CD8-positive, alpha-beta T cell (primary cell): ENCODE measurements at regions of chr4 and their contacts with region 1.

Region 1: DNA sequence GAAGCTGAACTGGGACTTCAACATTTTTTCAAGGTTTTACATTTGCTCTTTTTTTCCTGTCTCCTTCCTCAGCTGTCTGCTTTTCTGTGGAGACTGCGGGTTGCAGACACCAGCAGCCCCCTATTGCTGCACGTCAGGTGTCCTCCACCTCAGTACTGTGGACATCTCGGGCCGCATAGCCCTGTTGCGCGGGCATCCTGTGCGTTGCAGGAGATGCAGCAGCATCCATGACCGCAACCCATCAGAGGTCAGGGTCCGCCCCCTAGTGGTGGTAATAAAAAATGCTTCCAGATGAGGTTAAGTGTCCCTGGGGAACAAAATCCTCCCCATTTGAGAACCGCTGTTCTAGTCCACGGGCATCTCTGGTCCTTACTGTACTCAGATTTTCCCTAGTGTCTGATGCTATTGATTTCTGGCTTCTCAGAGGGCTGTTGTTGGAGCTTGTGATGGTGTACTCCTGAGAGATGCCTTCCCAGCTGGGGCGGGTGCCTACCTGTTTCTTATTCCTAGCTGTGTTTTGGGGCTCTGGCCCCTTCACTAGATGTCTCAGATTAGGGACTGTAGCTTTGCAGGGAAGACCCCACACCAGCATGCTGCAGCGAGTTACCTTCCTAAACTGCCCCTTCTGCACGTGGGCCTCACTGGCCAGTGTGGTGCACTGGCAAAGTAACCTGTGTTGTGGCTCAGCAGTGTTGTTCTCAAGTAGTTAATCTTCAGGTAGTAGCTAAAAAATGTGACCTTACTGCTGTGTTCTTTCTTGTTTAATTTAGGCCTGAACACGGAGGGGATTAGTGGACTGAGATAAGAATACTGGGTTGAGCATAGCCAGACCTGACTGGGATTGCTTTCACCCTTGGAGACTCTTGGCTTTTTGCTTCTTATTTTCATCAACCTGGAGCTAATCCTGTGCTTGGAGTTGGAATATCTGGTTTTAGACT is 28.2 kb downstream of the NSD2 start:
- DNase-seq: peak; percentile 30 to 87 (median 74)
- ATAC-seq: peak; percentile 99
- H3K4me3 ChIP-seq: no peak overlapping the region
- H3K4me3 Mint-ChIP-seq: no peak overlapping the region
- H3K27ac ChIP-seq: no peak overlapping the region
- H3K27ac Mint-ChIP-seq: no peak overlapping the region
- H3K4me1 ChIP-seq: peaks cover 6% of the 10 kb centered on the region
- H3K4me1 Mint-ChIP-seq: peaks cover 8% of the 10 kb centered on the region
- H3K27me3 ChIP-seq: no peaks in the 10 kb centered on the region
- H3K27me3 Mint-ChIP-seq: no peaks in the 10 kb centered on the region
- CTCF ChIP-seq: peak; percentile 89

Region 2: DNA sequence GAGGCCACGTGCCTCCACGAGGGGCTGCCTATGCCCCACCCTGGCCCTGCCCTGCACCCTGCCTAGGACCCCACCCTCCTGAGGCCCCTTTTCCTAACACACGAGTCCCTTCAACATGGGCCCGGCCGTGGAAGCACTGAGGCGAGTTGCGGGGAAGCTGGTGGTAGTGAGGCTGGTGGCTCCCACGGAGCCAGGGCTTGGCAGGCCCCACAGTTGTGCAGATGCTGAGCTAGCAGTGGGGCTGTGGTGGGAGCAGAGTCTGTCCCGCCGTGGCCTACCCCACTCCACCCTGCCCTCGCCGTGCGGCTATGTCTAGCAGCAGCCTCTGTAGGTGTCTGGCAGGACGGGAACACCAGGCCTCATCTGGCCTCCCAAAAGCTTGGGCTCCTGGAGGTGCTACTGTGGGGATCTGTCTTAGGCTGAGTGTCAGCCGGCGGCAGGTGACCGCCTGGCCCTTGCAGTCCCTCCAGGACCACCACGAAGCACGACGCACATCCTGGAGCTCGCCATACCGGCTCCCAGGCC is 159.3 kb before region 1 on chr4:
- CTCF ChIA-PET with region 1: interaction called, 220 read pairs
- POLR2A ChIA-PET with region 1: interaction called, 3 read pairs
- intact Hi-C with region 1: no loop called
- DNase-seq: no peak
- ATAC-seq: no peak
- H3K4me3 ChIP-seq: no peak overlapping the region
- H3K4me3 Mint-ChIP-seq: no peak overlapping the region
- H3K27ac ChIP-seq: no peak overlapping the region
- H3K27ac Mint-ChIP-seq: no peak overlapping the region
- H3K4me1 ChIP-seq: no peaks in the 10 kb centered on the region
- H3K4me1 Mint-ChIP-seq: no peaks in the 10 kb centered on the region
- H3K27me3 ChIP-seq: no peaks in the 10 kb centered on the region
- H3K27me3 Mint-ChIP-seq: no peaks in the 10 kb centered on the region
- CTCF ChIP-seq: no peak

Region 3: GRCh38 chr4:1809754-1810511 is 89.5 kb before region 1 on chr4:
- CTCF ChIA-PET with region 1: interaction called, 44 read pairs
- POLR2A ChIA-PET with region 1: no interaction called
- intact Hi-C with region 1: loop called (anchors 1 kb)
- DNase-seq: peak; percentile 35 to 75 (median 61)
- ATAC-seq: peak; percentile 71
- H3K4me3 ChIP-seq: no peak overlapping the region
- H3K4me3 Mint-ChIP-seq: no peak overlapping the region
- H3K27ac ChIP-seq: no peak overlapping the region
- H3K27ac Mint-ChIP-seq: no peak overlapping the region
- H3K4me1 ChIP-seq: no peaks in the 10 kb centered on the region
- H3K4me1 Mint-ChIP-seq: no peaks in the 10 kb centered on the region
- H3K27me3 ChIP-seq: no peaks in the 10 kb centered on the region
- H3K27me3 Mint-ChIP-seq: no peaks in the 10 kb centered on the region
- CTCF ChIP-seq: peak; percentile 72

Region 4: GRCh38 chr4:1842993-1843448 is 56.4 kb before region 1 on chr4:
- CTCF ChIA-PET with region 1: interaction called, 29 read pairs
- POLR2A ChIA-PET with region 1: no interaction called
- intact Hi-C with region 1: no loop called
- DNase-seq: no peak
- ATAC-seq: no peak
- H3K4me3 ChIP-seq: no peak overlapping the region
- H3K4me3 Mint-ChIP-seq: no peak overlapping the region
- H3K27ac ChIP-seq: no peak overlapping the region
- H3K27ac Mint-ChIP-seq: no peak overlapping the region
- H3K4me1 ChIP-seq: no peaks in the 10 kb centered on the region
- H3K4me1 Mint-ChIP-seq: peaks cover 16% of the 10 kb centered on the region
- H3K27me3 ChIP-seq: no peaks in the 10 kb centered on the region
- H3K27me3 Mint-ChIP-seq: no peaks in the 10 kb centered on the region
- CTCF ChIP-seq: no peak

Region 5: GRCh38 chr4:1862055-1862926 is 37.1 kb before region 1 on chr4:
- CTCF ChIA-PET with region 1: interaction called, 11 read pairs
- POLR2A ChIA-PET with region 1: no interaction called
- intact Hi-C with region 1: no loop called
- DNase-seq: peak in 6 of 9 experiments; percentile 15 to 60 (median 30)
- ATAC-seq: peak; percentile 76
- H3K4me3 ChIP-seq: peak overlapping the region; percentile 48 to 50
- H3K4me3 Mint-ChIP-seq: peak overlapping the region; percentile 84
- H3K27ac ChIP-seq: peak overlapping the region; percentile 11 to 52
- H3K27ac Mint-ChIP-seq: peak overlapping the region; percentile 88
- H3K4me1 ChIP-seq: peaks cover 34% of the 10 kb centered on the region
- H3K4me1 Mint-ChIP-seq: peaks cover 28% of the 10 kb centered on the region
- H3K27me3 ChIP-seq: no peaks in the 10 kb centered on the region
- H3K27me3 Mint-ChIP-seq: no peaks in the 10 kb centered on the region
- CTCF ChIP-seq: no peak

Region 6: DNA sequence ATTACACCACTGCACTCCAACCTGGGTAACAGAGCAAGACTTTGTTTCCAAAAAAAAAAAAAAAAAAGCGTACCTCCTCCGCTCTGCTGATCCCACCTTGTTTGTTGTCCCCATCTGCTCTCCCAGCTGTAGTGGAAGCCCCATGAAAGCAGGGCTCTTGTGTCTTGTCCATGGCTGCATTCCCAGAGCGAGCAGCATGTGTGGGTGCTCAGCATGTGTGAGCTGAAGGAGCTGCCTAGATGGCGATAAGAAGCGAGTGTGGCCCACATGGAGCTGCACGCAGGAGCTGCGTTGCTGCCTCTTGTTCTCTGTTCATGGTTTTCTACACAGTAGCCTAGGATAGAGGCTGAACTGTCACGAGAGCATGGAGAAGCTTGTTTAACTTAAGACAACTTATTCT is 15.8 kb before region 1 on chr4:
- CTCF ChIA-PET with region 1: interaction called, 54 read pairs
- POLR2A ChIA-PET with region 1: no interaction called
- intact Hi-C with region 1: no loop called
- DNase-seq: no peak
- ATAC-seq: no peak
- H3K4me3 ChIP-seq: no peak overlapping the region
- H3K4me3 Mint-ChIP-seq: no peak overlapping the region
- H3K27ac ChIP-seq: no peak overlapping the region
- H3K27ac Mint-ChIP-seq: no peak overlapping the region
- H3K4me1 ChIP-seq: no peaks in the 10 kb centered on the region
- H3K4me1 Mint-ChIP-seq: peaks cover 23% of the 10 kb centered on the region
- H3K27me3 ChIP-seq: no peaks in the 10 kb centered on the region
- H3K27me3 Mint-ChIP-seq: no peaks in the 10 kb centered on the region
- CTCF ChIP-seq: no peak

Region 7: GRCh38 chr4:1976416-1977352 is 77.3 kb after region 1 on chr4:
- CTCF ChIA-PET with region 1: no interaction called
- POLR2A ChIA-PET with region 1: no interaction called
- intact Hi-C with region 1: no loop called
- DNase-seq: no peak
- ATAC-seq: no peak
- H3K4me3 ChIP-seq: no peak overlapping the region
- H3K4me3 Mint-ChIP-seq: no peak overlapping the region
- H3K27ac ChIP-seq: no peak overlapping the region
- H3K27ac Mint-ChIP-seq: no peak overlapping the region
- H3K4me1 ChIP-seq: no peaks in the 10 kb centered on the region
- H3K4me1 Mint-ChIP-seq: no peaks in the 10 kb centered on the region
- H3K27me3 ChIP-seq: no peaks in the 10 kb centered on the region
- H3K27me3 Mint-ChIP-seq: no peaks in the 10 kb centered on the region
- CTCF ChIP-seq: no peak

Region 8: GRCh38 chr4:2154215-2154740 is 254.9 kb after region 1 on chr4:
- CTCF ChIA-PET with region 1: no interaction called
- POLR2A ChIA-PET with region 1: no interaction called
- intact Hi-C with region 1: no loop called
- DNase-seq: no peak
- ATAC-seq: no peak
- H3K4me3 ChIP-seq: no peak overlapping the region
- H3K4me3 Mint-ChIP-seq: no peak overlapping the region
- H3K27ac ChIP-seq: no peak overlapping the region
- H3K27ac Mint-ChIP-seq: no peak overlapping the region
- H3K4me1 ChIP-seq: no peaks in the 10 kb centered on the region
- H3K4me1 Mint-ChIP-seq: no peaks in the 10 kb centered on the region
- H3K27me3 ChIP-seq: no peaks in the 10 kb centered on the region
- H3K27me3 Mint-ChIP-seq: no peaks in the 10 kb centered on the region
- CTCF ChIP-seq: no peak